Caco-2 (cell line): ENCODE measurements at regions of chr17 and their contacts with region 1.

Region 1: DNA sequence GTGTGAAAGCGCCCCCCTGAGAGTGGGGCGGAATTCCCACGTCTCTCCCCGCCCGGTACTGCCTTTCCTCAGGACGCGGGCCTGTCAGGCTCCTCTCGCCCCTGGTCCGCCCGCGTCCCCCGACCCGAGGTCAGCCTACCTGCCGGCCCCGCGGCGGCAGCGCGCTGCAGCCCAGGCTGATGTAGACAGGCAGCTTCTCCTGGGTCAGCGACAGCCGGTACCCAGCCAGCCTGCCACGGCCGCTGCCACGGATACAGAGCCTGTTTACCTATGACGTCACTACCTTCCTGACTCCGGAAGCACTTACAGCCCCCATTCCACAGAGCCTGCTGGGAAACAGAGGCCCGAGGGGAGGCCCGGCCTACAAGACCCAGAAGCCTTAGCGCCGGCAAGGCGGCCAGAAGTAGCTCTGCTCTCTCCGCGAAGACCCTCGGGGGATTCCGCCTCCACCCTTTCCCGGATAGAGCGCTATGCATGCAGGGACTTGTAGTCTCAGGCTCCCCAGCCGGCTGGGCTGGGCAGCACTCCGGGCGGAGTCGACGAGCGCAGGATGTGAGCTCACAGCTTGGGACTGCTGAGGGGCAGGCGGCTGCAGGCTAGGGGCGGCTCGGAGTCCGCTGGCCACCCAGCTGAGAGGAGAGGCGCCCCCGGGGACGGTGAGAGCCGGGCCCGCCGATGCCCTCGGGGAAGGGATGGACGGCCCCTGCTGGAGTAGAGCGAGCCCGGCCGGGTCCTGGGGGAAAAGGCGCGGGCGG is at the starts of genes IFT20 and TNFAIP1:
- DNase-seq: peak; percentile 100
- H3K4me3 ChIP-seq: peak within 1 kb of the TSS; percentile 86
- H3K4me3 Mint-ChIP-seq: peak within 1 kb of the TSS; percentile 97
- H3K27ac Mint-ChIP-seq: peak within 1 kb of the TSS; percentile 98
- H3K4me1 ChIP-seq: peaks cover 27% of the 10 kb centered on the region
- H3K4me1 Mint-ChIP-seq: peaks cover 33% of the 10 kb centered on the region
- H3K27me3 ChIP-seq: no peaks in the 10 kb centered on the region
- H3K27me3 Mint-ChIP-seq: no peaks in the 10 kb centered on the region
- CTCF ChIP-seq: no peak
- total RNA-seq, gene IFT20: 86.3 and 89.9 TPM in 2 replicates
- total RNA-seq, gene TNFAIP1: 105 and 119 TPM in 2 replicates

Region 2: DNA sequence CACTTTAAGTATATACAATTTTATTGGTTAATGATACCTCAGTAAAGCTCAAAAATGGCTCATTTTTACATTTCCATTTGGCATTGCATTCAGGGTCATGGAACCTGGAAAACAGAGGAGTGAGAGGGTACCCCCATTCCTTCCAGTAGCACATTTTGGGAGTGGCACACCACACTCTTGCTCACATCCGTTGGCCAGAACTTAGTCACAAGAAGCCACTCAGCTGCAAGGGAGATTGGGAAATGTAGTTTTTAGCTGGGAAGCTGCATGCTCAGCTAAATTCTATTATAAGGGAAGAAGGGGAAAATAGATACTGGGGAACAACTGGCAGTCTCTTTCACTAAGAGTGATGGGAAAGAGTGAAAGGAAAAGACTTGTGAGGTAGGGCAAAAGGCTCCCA is 118.8 kb before region 1 on chr17:
- CTCF ChIA-PET with region 1: no interaction called
- POLR2A ChIA-PET with region 1: no interaction called
- intact Hi-C with region 1: no loop called
- DNase-seq: no peak
- H3K4me3 ChIP-seq: no peak overlapping the region
- H3K4me3 Mint-ChIP-seq: no peak overlapping the region
- H3K27ac Mint-ChIP-seq: no peak overlapping the region
- H3K4me1 ChIP-seq: no peaks in the 10 kb centered on the region
- H3K4me1 Mint-ChIP-seq: no peaks in the 10 kb centered on the region
- H3K27me3 ChIP-seq: no peaks in the 10 kb centered on the region
- H3K27me3 Mint-ChIP-seq: no peaks in the 10 kb centered on the region
- CTCF ChIP-seq: no peak

Region 3: GRCh38 chr17:28227316-28228125 is 107.9 kb before region 1 on chr17:
- CTCF ChIA-PET with region 1: interaction called, 44 read pairs
- POLR2A ChIA-PET with region 1: interaction called, 26 read pairs
- intact Hi-C with region 1: loop called (anchors 1 kb)
- DNase-seq: peak; percentile 100
- H3K4me3 ChIP-seq: peak overlapping the region; percentile 88
- H3K4me3 Mint-ChIP-seq: peak overlapping the region; percentile 91
- H3K27ac Mint-ChIP-seq: peak overlapping the region; percentile 95
- H3K4me1 ChIP-seq: peaks cover 32% of the 10 kb centered on the region
- H3K4me1 Mint-ChIP-seq: peaks cover 24% of the 10 kb centered on the region
- H3K27me3 ChIP-seq: no peaks in the 10 kb centered on the region
- H3K27me3 Mint-ChIP-seq: no peaks in the 10 kb centered on the region
- CTCF ChIP-seq: peak; percentile 16 to 45

Region 4: DNA sequence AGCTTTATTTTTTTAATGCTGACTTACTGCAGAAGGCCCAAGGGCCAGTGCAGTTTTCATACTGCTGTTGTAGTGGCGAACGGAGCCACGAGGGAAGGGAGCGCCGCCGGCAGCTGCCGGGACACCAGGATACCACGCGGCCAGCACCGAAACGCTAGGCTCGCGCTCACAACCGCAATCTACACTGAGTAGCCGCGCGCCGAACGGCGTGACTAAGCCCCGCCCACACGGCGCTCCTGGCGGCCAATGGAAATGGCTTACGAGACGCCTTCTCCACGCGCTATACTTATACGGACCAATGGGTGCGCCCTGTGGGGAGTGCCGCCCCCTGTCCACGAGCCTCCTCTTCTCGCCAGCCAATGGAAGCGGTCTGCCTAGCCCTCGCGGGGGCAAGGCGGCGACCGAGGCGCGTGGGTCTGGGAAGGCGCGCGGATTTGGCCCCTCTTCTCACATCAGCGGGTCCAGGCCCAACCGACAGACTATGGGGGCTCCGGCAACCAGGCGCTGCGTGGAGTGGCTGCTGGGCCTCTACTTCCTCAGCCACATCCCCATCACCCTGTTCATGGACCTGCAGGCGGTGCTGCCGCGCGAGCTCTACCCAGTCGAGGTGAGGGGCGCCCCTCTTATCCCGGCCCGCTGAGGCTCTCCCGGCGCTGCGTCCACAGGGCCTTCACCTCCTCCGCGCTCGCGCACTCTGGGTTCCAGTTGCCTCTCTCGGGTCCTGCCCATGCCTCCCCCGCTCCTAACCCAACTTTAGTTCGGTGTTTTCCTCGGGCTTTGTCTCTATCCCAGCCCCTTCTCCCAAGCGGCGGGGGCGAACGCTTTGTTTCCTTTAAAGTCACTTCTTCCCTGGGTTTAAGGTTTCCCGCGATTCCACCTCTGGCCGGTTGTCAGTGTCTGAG is 16.4 kb before region 1 on chr17 and contains the start of gene TMEM97:
- CTCF ChIA-PET with region 1: interaction called, 34 read pairs
- POLR2A ChIA-PET with region 1: interaction called, 75 read pairs
- intact Hi-C with region 1: loop called (anchors 1 kb)
- DNase-seq: peak; percentile 100
- H3K4me3 ChIP-seq: peak within 1 kb of the TSS; percentile 67
- H3K4me3 Mint-ChIP-seq: peak within 1 kb of the TSS; percentile 76
- H3K27ac Mint-ChIP-seq: peak within 1 kb of the TSS; percentile 43
- H3K4me1 ChIP-seq: peaks cover 22% of the 10 kb centered on the region
- H3K4me1 Mint-ChIP-seq: peaks cover 49% of the 10 kb centered on the region
- H3K27me3 ChIP-seq: no peaks in the 10 kb centered on the region
- H3K27me3 Mint-ChIP-seq: no peaks in the 10 kb centered on the region
- CTCF ChIP-seq: peak; percentile 7 to 33
- total RNA-seq, gene TMEM97: 313 and 342 TPM in 2 replicates

Region 5: GRCh38 chr17:28357061-28357900 is 21.9 kb after region 1 on chr17 and contains the start of gene POLDIP2:
- CTCF ChIA-PET with region 1: interaction called, 43 read pairs
- POLR2A ChIA-PET with region 1: interaction called, 139 read pairs
- intact Hi-C with region 1: loop called (anchors 1 kb)
- DNase-seq: peak; percentile 99 to 100
- H3K4me3 ChIP-seq: peak within 1 kb of the TSS; percentile 78
- H3K4me3 Mint-ChIP-seq: peak within 1 kb of the TSS; percentile 90
- H3K27ac Mint-ChIP-seq: peak within 1 kb of the TSS; percentile 96
- H3K4me1 ChIP-seq: peaks cover 15% of the 10 kb centered on the region
- H3K4me1 Mint-ChIP-seq: peaks cover 22% of the 10 kb centered on the region
- H3K27me3 ChIP-seq: no peaks in the 10 kb centered on the region
- H3K27me3 Mint-ChIP-seq: no peaks in the 10 kb centered on the region
- CTCF ChIP-seq: peak in 1 of 2 experiments; percentile 15
- total RNA-seq, gene POLDIP2: 257 and 265 TPM in 2 replicates

Region 6: GRCh38 chr17:28371245-28372202 is 36.1 kb after region 1 on chr17 and contains the start of gene SARM1:
- CTCF ChIA-PET with region 1: interaction called, 38 read pairs
- POLR2A ChIA-PET with region 1: interaction called, 87 read pairs
- intact Hi-C with region 1: loop called (anchors 1 kb)
- DNase-seq: peak; percentile 99 to 100
- H3K4me3 ChIP-seq: peak within 1 kb of the TSS; percentile 40
- H3K4me3 Mint-ChIP-seq: peak within 1 kb of the TSS; percentile 75
- H3K27ac Mint-ChIP-seq: peak within 1 kb of the TSS; percentile 88
- H3K4me1 ChIP-seq: peaks cover 46% of the 10 kb centered on the region
- H3K4me1 Mint-ChIP-seq: peaks cover 54% of the 10 kb centered on the region
- H3K27me3 ChIP-seq: no peaks in the 10 kb centered on the region
- H3K27me3 Mint-ChIP-seq: no peaks in the 10 kb centered on the region
- CTCF ChIP-seq: no peak
- total RNA-seq, gene SARM1: 32.8 and 34.4 TPM in 2 replicates

Region 7: DNA sequence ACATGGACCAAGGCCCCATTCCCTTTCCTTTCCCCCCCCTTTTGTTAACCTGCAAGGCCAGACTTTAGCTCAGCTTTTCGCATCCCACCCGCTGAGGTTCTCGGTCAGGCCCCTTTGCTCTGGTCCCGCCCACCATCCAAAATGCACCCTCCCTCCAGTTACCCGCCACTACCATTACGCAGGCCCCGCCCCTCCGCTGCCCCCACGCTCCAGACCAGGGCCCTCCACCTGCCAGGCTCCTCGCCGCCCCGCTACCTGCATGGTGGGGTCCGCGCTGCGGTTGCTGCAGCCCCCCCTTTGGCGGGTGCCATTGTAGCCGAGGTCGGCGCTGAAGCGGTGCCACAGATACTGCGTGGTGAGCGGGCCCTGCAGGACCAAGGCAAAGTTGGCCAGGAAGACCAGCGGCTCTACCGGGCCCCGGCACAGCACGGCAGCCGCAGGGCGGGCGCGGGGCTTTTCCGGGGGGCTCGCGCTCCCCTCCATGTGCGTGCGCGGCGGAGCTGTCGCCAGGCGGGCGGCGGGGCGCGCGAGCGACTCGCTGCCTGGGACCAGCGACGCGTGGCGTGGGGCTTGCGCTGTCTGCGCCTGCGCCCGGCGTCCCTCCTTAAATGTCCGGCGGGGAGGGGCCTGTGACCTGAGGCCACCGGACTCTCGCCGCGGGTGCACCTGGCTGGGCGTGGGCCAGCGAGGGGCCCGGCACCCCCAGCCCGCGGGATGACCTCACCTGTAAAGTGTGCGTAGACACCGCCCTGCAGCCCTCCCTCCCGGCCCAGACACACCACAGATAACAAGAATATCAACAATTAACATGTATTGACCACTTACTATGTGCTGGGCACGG is 70.5 kb after region 1 on chr17 and contains the start of gene SLC46A1:
- CTCF ChIA-PET with region 1: interaction called, 9 read pairs
- POLR2A ChIA-PET with region 1: interaction called, 40 read pairs
- intact Hi-C with region 1: no loop called
- DNase-seq: peak; percentile 96 to 97
- H3K4me3 ChIP-seq: peak within 1 kb of the TSS; percentile 78
- H3K4me3 Mint-ChIP-seq: peak within 1 kb of the TSS; percentile 90
- H3K27ac Mint-ChIP-seq: peak within 1 kb of the TSS; percentile 72
- H3K4me1 ChIP-seq: peaks cover 56% of the 10 kb centered on the region
- H3K4me1 Mint-ChIP-seq: peaks cover 31% of the 10 kb centered on the region
- H3K27me3 ChIP-seq: no peaks in the 10 kb centered on the region
- H3K27me3 Mint-ChIP-seq: no peaks in the 10 kb centered on the region
- CTCF ChIP-seq: no peak
- total RNA-seq, gene SLC46A1: 114 and 128 TPM in 2 replicates

Region 8: GRCh38 chr17:28552246-28552999 is 217.0 kb after region 1 on chr17 and contains the start of gene UNC119:
- CTCF ChIA-PET with region 1: interaction called, 8 read pairs
- POLR2A ChIA-PET with region 1: interaction called, 10 read pairs
- intact Hi-C with region 1: no loop called
- DNase-seq: peak; percentile 75 to 88
- H3K4me3 ChIP-seq: peak within 1 kb of the TSS; percentile 94
- H3K4me3 Mint-ChIP-seq: peak within 1 kb of the TSS; percentile 81
- H3K27ac Mint-ChIP-seq: peak within 1 kb of the TSS; percentile 74
- H3K4me1 ChIP-seq: peaks cover 26% of the 10 kb centered on the region
- H3K4me1 Mint-ChIP-seq: peaks cover 31% of the 10 kb centered on the region
- H3K27me3 ChIP-seq: no peaks in the 10 kb centered on the region
- H3K27me3 Mint-ChIP-seq: no peaks in the 10 kb centered on the region
- CTCF ChIP-seq: no peak
- total RNA-seq, gene UNC119: 40.5 and 41.3 TPM in 2 replicates